HCT116 (cell line): ENCODE measurements at regions of chr20 and their contacts with region 1.

Region 1: DNA sequence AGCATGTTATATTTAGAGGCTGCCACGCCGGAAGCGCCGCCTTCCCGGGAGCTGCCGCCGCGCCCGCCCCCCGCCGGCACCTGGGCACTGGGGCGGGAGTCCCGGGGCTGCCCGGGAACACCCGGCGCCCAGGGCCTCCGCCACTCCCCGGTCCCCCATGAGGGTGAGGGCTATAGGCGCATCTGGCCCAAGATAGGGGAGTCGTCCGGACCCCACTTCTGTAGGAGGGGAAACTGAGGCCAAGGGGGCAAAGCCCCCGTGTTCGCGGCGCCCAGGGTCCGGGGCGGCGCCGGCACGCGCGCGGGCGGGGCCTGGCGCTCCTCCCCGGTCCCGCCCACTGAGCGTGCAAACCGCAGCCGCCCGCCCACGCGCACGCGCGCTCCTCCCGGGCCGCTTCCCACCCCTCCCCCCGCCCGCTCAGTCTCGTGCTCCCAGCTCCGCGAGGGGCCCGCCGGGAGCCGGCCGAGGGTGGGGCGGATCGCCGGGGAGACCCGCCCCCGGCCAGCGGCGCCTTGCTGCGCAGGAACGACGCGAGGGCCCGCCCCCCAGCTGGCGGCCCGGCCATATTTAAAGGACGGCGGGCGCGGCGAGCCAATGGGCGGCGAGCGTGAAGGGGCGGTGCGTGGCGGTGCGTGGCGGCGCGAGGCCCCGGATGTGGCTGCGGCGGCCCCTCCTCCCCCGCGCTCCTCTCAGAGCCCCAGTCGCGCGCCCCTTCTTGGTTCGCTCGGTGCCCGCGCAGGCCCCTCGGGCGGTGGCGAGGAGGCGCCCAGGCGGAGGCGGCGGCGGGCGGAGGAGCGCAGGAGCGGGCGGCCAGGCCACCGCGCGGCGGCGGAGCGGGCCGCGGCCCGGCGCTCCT is at the start of gene LSM14B:
- DNase-seq: peak; percentile 89
- ATAC-seq: peak; percentile 86
- H3K4me3 ChIP-seq: peak within 1 kb of the TSS; percentile 53 to 75
- H3K27ac ChIP-seq: peak within 1 kb of the TSS; percentile 97
- H3K4me1 ChIP-seq: peaks cover 12 to 26% of the 10 kb centered on the region in 2 experiments
- H3K27me3 ChIP-seq: no peaks in the 10 kb centered on the region
- CTCF ChIP-seq: no peak
- POLR2A ChIP-seq: peak; percentile 10
- RAD21 ChIP-seq: no peak
- total RNA-seq, gene LSM14B: 51.3 TPM

Region 2: GRCh38 chr20:62065669-62066338 is 56.2 kb before region 1 on chr20 and contains the start of gene TAF4:
- CTCF ChIA-PET with region 1: no interaction called
- POLR2A ChIA-PET with region 1: interaction called, 8 read pairs
- RAD21 ChIA-PET with region 1: no interaction called
- intact Hi-C with region 1: loop called (anchors 5 kb)
- DNase-seq: no peak
- ATAC-seq: peak; percentile 80
- H3K4me3 ChIP-seq: peak within 1 kb of the TSS; percentile 59 to 63
- H3K27ac ChIP-seq: peak within 1 kb of the TSS; percentile 88
- H3K4me1 ChIP-seq: peaks cover 12 to 29% of the 10 kb centered on the region in 2 experiments
- H3K27me3 ChIP-seq: no peaks in the 10 kb centered on the region
- CTCF ChIP-seq: no peak
- POLR2A ChIP-seq: peak; percentile 89
- RAD21 ChIP-seq: no peak
- total RNA-seq, gene TAF4: 26.8 TPM